ENCODE measurements at regions of chr9 and their contacts with region 1.

Region 1: DNA sequence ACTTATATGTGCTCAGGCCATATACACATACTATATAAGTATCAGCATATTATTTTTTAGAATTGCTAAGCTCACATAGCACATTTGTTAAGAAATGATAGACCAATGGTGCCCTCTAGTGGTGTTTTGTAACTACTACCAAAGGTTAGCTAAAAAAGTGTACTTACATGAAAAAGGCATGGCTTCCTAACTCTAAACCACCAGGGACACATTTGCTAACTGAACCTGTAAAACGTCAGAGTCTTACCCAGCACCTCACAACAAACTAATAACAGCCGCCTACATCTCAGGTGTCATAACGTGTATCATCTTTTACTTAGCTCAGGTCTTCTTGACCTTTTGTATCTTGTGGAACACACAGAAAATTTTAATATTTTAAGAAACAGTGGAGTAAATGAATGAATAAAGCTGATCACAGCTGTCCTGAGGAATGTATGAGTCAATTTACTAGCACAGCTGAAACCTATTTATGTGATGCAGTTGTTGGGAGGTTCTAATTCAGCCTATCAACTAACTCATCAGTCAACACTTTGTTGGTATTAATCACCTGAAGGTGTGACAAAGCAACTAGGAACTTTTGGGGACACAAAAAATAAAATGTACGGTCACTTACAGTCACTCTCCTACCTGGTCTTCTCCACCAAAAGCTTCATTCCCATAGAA is 72.9 kb downstream of the BAAT start:
- DNase-seq: no peak
- H3K4me3 Mint-ChIP-seq: no peak overlapping the region
- H3K27ac Mint-ChIP-seq: no peak overlapping the region
- H3K4me1 Mint-ChIP-seq: no peaks in the 10 kb centered on the region
- H3K27me3 Mint-ChIP-seq: no peaks in the 10 kb centered on the region

Region 2: DNA sequence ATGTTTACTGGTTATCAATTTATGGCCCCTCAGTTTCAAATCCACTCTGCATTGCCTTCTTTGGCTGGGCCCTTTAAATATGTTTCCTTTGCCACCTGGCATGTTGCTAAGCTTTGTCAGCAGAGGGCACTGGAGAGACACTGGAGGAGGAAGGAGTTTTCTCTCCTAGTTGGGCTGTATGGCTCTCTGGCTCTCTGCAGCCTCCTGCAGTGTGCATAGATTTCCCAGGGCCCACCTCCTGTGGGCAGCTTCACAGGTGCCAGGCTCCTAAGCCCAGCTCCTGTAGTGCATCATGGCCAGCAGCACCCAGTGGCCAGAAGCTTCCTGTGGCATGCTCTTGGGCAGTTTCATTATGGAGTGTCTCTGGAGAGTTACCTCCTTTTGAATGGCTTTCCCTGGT is 710.7 kb before region 1 on chr9:
- CTCF ChIA-PET with region 1: interaction called, 43 read pairs
- DNase-seq: peak; percentile 68
- H3K4me3 Mint-ChIP-seq: no peak overlapping the region
- H3K27ac Mint-ChIP-seq: no peak overlapping the region
- H3K4me1 Mint-ChIP-seq: peaks cover 19% of the 10 kb centered on the region
- H3K27me3 Mint-ChIP-seq: peaks cover 15% of the 10 kb centered on the region

Region 3: DNA sequence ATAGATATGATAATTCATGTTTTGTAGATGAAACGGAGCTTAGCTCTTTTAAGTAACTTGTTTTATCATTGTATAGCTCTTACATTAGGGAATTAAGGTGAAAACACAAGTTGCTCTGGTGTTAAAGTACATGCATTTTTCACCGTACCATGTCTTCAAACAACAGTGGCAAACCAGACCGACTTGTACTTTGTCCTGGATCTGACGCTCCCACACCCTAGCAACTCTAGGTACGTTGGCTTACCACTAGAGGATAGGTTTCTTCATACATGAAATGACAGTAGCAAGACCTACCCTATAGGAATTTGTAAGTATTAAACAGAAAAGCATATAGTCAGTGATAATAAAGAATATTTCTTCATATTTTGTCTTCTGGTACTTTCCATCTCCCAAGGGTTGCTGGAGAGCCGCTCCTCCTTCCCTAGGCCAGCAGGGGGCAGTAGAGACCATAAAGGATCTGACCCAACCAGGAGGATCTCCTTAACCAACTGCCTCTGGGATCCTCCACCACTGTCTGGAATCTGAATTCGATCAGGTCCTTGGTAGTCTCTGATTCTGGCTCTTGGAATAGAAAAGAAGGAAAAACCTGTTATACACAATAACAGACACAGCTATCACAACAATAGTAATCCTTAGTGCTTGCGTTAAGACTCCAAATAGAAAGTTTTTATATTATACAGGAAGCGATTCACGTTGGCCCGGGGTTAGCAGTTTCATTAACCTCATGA is 597.4 kb before region 1 on chr9:
- CTCF ChIA-PET with region 1: interaction called, 21 read pairs
- DNase-seq: peak; percentile 64
- H3K4me3 Mint-ChIP-seq: no peak overlapping the region
- H3K27ac Mint-ChIP-seq: no peak overlapping the region
- H3K4me1 Mint-ChIP-seq: no peaks in the 10 kb centered on the region
- H3K27me3 Mint-ChIP-seq: no peaks in the 10 kb centered on the region

Region 4: GRCh38 chr9:101119206-101119819 is 192.6 kb before region 1 on chr9:
- CTCF ChIA-PET with region 1: interaction called, 10 read pairs
- DNase-seq: peak; percentile 24
- H3K4me3 Mint-ChIP-seq: no peak overlapping the region
- H3K27ac Mint-ChIP-seq: no peak overlapping the region
- H3K4me1 Mint-ChIP-seq: no peaks in the 10 kb centered on the region
- H3K27me3 Mint-ChIP-seq: peaks cover 3% of the 10 kb centered on the region

Region 5: DNA sequence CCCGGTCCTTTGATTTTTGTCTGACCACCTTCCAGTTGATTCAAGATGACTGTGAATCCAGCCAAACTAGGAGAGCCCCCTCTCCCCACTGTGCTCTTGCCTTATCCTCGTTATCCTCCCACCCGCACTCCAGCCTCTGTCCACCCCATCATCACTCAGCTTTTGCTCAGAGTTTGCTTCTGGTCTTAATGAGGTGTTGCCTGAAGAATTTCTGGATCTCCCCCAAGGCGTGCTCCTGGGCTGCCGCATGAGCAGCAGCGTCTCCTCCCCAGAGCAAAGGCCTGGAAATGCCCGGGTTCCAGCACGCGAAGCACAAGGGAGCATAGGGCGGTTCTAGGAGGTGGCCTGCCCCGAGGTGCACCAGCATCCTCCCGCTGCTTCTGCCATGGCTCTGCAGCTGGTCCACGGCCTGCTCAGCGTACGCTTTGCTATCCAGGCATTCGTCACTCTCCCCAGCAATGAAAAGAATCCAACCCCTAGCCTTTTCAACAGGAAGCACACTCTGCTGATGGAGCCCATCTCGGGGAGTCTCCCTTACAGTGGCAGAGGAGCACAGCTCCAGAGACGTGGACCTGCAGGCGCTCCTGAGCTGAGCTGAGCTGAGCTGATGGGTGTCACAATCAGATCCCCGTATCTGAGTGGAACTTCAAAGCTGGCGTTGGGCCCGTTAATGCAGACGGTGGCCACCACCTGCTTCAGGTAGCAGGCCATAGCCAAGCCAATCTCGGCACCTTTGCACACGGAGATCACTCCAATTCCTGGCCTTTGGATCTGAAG is 22.2 kb after region 1 on chr9:
- CTCF ChIA-PET with region 1: no interaction called
- DNase-seq: no peak
- H3K4me3 Mint-ChIP-seq: no peak overlapping the region
- H3K27ac Mint-ChIP-seq: no peak overlapping the region
- H3K4me1 Mint-ChIP-seq: no peaks in the 10 kb centered on the region
- H3K27me3 Mint-ChIP-seq: peaks cover 5% of the 10 kb centered on the region